ENCODE measurements at regions of chr15 and their contacts with region 1.

Region 1: GRCh38 chr15:63497642-63498467 is 6.5 kb upstream of the USP3 start:
- DNase-seq: peak; percentile 81 to 94 (median 83)
- H3K4me3 ChIP-seq: peak overlapping the region in 1 of 2 donors; percentile 42
- H3K4me3 Mint-ChIP-seq: no peak overlapping the region
- H3K27ac ChIP-seq: peak overlapping the region; percentile 81
- H3K27ac Mint-ChIP-seq: no peak overlapping the region
- H3K4me1 ChIP-seq: peaks cover 96% of the 10 kb centered on the region
- H3K4me1 Mint-ChIP-seq: peaks cover 34 to 82% (median 62%) of the 10 kb centered on the region in 4 donors
- H3K27me3 ChIP-seq: no peaks in the 10 kb centered on the region
- H3K27me3 Mint-ChIP-seq: no peaks in the 10 kb centered on the region

Region 2: GRCh38 chr15:63374686-63375520 is 123.0 kb before region 1 on chr15:
- CTCF ChIA-PET with region 1: no interaction called
- POLR2A ChIA-PET with region 1: no interaction called
- intact Hi-C with region 1: no loop called
- DNase-seq: no peak
- H3K4me3 ChIP-seq: no peak overlapping the region
- H3K4me3 Mint-ChIP-seq: no peak overlapping the region
- H3K27ac ChIP-seq: no peak overlapping the region
- H3K27ac Mint-ChIP-seq: peak overlapping the region in 2 of 7 donors; percentile 34 to 67
- H3K4me1 ChIP-seq: no peaks in the 10 kb centered on the region
- H3K4me1 Mint-ChIP-seq: peaks cover 5 to 10% (median 6%) of the 10 kb centered on the region in 4 donors
- H3K27me3 ChIP-seq: no peaks in the 10 kb centered on the region
- H3K27me3 Mint-ChIP-seq: peaks cover 16 to 27% of the 10 kb centered on the region in 2 donors

Region 3: GRCh38 chr15:63473999-63474809 is 23.7 kb before region 1 on chr15:
- CTCF ChIA-PET with region 1: interaction called, 224 read pairs
- POLR2A ChIA-PET with region 1: interaction called, 906 read pairs
- intact Hi-C with region 1: loop called (anchors 1 kb)
- DNase-seq: peak in 4 of 5 donors; percentile 51 to 87 (median 60)
- H3K4me3 ChIP-seq: no peak overlapping the region
- H3K4me3 Mint-ChIP-seq: peak overlapping the region in 6 of 8 donors; percentile 62 to 86 (median 78)
- H3K27ac ChIP-seq: peak overlapping the region; percentile 43
- H3K27ac Mint-ChIP-seq: peak overlapping the region; percentile 87 to 99 (median 97)
- H3K4me1 ChIP-seq: peaks cover 59% of the 10 kb centered on the region
- H3K4me1 Mint-ChIP-seq: peaks cover 38 to 58% (median 54%) of the 10 kb centered on the region in 4 donors
- H3K27me3 ChIP-seq: no peaks in the 10 kb centered on the region
- H3K27me3 Mint-ChIP-seq: no peaks in the 10 kb centered on the region

Region 4: DNA sequence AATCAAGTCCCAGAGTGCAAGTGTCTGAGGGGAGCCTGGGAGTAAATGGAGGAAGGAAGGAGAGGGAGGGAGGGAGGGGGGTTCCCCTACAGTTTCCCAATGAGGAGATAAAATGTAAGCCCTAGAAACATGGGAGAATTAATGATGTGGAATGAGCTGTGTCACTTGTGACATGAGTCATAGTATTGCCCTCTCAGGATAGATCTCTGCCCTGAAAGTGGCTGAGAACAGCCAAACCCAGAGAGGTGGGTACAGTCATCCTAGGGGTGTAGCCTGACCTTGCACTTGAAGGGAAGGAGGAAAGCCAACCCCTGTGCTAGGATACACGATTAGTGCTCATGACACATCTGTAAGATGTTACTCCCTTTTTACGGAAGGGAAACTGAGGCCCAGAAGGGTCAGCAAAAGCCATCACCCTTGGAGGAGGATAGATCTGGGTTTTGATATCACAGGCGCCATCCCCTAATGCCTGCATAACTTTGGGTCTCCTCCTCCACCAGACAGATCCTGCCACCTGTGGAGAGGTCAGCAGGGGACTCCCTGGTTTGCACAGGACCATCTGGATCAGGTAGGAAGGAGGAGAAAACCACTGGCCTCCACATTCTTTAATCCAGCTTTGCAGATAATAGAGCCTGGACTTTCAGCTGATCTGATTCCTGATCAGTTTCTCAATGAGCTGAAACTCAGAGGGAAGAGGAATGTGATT is 16.6 kb before region 1 on chr15:
- CTCF ChIA-PET with region 1: interaction called, 224 read pairs
- POLR2A ChIA-PET with region 1: interaction called, 906 read pairs
- intact Hi-C with region 1: loop called (anchors 1 kb)
- DNase-seq: peak in 1 of 5 donors; percentile 60
- H3K4me3 ChIP-seq: no peak overlapping the region
- H3K4me3 Mint-ChIP-seq: peak overlapping the region in 6 of 8 donors; percentile 31 to 84 (median 78)
- H3K27ac ChIP-seq: peak overlapping the region; percentile 81
- H3K27ac Mint-ChIP-seq: peak overlapping the region; percentile 92 to 100 (median 100)
- H3K4me1 ChIP-seq: peaks cover 97% of the 10 kb centered on the region
- H3K4me1 Mint-ChIP-seq: peaks cover 52 to 85% (median 70%) of the 10 kb centered on the region in 4 donors
- H3K27me3 ChIP-seq: no peaks in the 10 kb centered on the region
- H3K27me3 Mint-ChIP-seq: no peaks in the 10 kb centered on the region

Region 5: DNA sequence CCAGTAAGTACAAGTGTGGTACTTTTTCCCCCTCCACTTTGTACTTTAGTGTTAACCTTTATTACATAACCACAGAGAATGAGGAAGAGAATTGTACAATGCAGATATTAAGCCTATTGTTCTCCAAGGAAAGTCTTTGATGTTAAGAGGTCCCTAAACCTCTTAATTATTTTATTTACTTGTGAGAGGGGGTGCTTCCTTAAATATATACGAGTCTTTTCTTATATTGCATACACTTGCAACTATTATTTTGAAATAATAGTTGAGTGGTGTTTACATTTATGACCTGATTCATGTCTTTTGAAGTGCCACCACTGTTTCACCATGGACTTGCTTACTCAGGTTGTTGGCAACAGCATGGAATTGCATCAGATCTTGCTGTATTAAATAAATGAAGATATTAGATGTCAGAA is 16.7 kb after region 1 on chr15:
- CTCF ChIA-PET with region 1: interaction called, 5 read pairs
- POLR2A ChIA-PET with region 1: interaction called, 21 read pairs
- intact Hi-C with region 1: no loop called
- DNase-seq: no peak
- H3K4me3 ChIP-seq: no peak overlapping the region
- H3K4me3 Mint-ChIP-seq: peak overlapping the region in 7 of 8 donors; percentile 33 to 84 (median 59)
- H3K27ac ChIP-seq: no peak overlapping the region
- H3K27ac Mint-ChIP-seq: peak overlapping the region; percentile 19 to 91 (median 70)
- H3K4me1 ChIP-seq: peaks cover 100% of the 10 kb centered on the region
- H3K4me1 Mint-ChIP-seq: peaks cover 67 to 97% (median 87%) of the 10 kb centered on the region in 4 donors
- H3K27me3 ChIP-seq: no peaks in the 10 kb centered on the region
- H3K27me3 Mint-ChIP-seq: no peaks in the 10 kb centered on the region

Region 6: DNA sequence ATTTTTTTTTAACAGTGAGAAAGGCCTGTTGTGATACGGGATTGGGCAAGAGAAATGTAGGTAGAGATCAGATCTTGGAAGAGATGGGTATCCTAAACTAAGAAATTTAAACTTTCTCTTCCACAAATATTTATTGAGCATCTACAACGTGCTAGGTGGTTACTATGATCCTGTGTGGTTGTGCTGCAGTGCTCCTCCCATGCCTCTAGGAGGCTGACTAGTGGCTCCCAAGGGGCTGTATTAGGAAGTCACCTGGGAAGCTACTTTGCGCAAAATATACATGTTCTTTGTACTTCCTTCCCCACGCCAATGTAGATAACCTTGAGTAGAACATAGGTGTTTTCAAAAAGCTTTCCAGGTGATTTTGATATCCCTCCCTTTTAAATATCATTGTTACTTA is 33.7 kb after region 1 on chr15:
- CTCF ChIA-PET with region 1: no interaction called
- POLR2A ChIA-PET with region 1: interaction called, 10 read pairs
- intact Hi-C with region 1: no loop called
- DNase-seq: no peak
- H3K4me3 ChIP-seq: no peak overlapping the region
- H3K4me3 Mint-ChIP-seq: peak overlapping the region in 5 of 8 donors; percentile 21 to 59 (median 35)
- H3K27ac ChIP-seq: no peak overlapping the region
- H3K27ac Mint-ChIP-seq: peak overlapping the region in 5 of 7 donors; percentile 16 to 65 (median 25)
- H3K4me1 ChIP-seq: peaks cover 93% of the 10 kb centered on the region
- H3K4me1 Mint-ChIP-seq: peaks cover 70 to 95% (median 86%) of the 10 kb centered on the region in 4 donors
- H3K27me3 ChIP-seq: no peaks in the 10 kb centered on the region
- H3K27me3 Mint-ChIP-seq: no peaks in the 10 kb centered on the region

Region 7: GRCh38 chr15:63783441-63783840 is 285.6 kb after region 1 on chr15:
- CTCF ChIA-PET with region 1: no interaction called
- POLR2A ChIA-PET with region 1: no interaction called
- intact Hi-C with region 1: no loop called
- DNase-seq: no peak
- H3K4me3 ChIP-seq: no peak overlapping the region
- H3K4me3 Mint-ChIP-seq: no peak overlapping the region
- H3K27ac ChIP-seq: no peak overlapping the region
- H3K27ac Mint-ChIP-seq: no peak overlapping the region
- H3K4me1 ChIP-seq: no peaks in the 10 kb centered on the region
- H3K4me1 Mint-ChIP-seq: peaks cover 28 to 55% (median 41%) of the 10 kb centered on the region in 4 donors
- H3K27me3 ChIP-seq: no peaks in the 10 kb centered on the region
- H3K27me3 Mint-ChIP-seq: no peaks in the 10 kb centered on the region

Measured in CD4-positive, alpha-beta memory T cell (primary cell).